H1 (cell line): ENCODE measurements at regions of chr11 and their contacts with region 1.

Region 1: GRCh38 chr11:59918987-59919589 is 19.1 kb upstream of the OOSP1 start:
- DNase-seq: peak in 1 of 2 experiments; percentile 55
- H3K4me3 ChIP-seq: no peak overlapping the region
- H3K27ac ChIP-seq: no peak overlapping the region
- H3K4me1 ChIP-seq: no peaks in the 10 kb centered on the region
- H3K27me3 ChIP-seq: no peaks in the 10 kb centered on the region
- CTCF ChIP-seq: peak in 2 of 3 experiments; percentile 54 to 66; a peak in 3 of 4 replicates
- EP300 ChIP-seq: no peak
- POLR2A ChIP-seq: no peak
- RAD21 ChIP-seq: peak; percentile 80 to 88

Region 2: DNA sequence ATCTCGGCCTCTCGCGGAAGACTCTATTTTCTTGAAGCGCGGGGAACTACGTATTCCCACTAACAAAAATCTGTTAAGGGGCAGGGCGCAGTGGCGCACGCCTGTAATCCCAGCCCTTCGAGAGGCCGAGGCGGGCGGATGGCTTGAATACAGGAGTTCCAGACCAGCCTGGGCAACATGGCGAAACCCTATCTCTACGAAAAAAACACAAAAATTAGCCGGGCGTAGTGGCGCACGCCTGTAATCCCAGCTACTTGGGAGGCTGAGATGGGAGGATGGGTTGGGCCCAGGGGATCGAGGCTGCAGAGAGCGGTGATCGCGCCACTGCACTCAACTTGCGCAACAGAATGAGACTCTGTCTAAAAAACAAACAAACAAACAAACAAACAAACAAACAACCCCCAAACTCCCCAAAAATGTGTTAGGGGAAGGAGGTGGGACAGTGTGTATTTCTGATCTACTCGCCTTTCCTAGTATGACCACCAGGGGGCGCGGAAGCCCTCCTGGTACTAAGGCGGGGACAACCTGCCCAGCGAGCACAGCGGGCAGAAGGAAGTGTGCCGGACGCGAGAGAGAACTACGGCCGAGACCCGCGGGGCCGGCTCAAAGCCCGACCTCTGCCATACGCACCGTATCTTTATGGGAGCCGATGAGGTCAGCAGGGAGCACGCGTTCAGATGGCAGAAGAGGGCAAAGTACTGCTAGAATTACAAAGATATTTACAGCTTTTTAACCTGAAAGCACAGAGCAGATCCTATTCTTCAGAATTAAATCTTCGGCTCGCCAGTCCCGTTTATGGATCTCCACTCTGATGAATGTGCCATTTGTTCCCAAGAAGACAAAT is 165.2 kb before region 1 on chr11:
- CTCF ChIA-PET with region 1: interaction called, 12 read pairs
- POLR2A ChIA-PET with region 1: interaction called, 3 read pairs
- DNase-seq: peak in 1 of 2 experiments; percentile 92
- H3K4me3 ChIP-seq: peak overlapping the region; percentile 88 to 94 (median 89)
- H3K27ac ChIP-seq: no peak overlapping the region
- H3K4me1 ChIP-seq: peaks cover 2 to 11% (median 7%) of the 10 kb centered on the region in 4 experiments; a peak in 6 of 7 replicates
- H3K27me3 ChIP-seq: peaks cover 0 to 6% (median 0%) of the 10 kb centered on the region in 4 experiments; a peak in 1 of 7 replicates
- CTCF ChIP-seq: peak; percentile 76 to 83 (median 78)
- EP300 ChIP-seq: no peak
- POLR2A ChIP-seq: no peak
- RAD21 ChIP-seq: peak; percentile 72 to 74

Region 3: GRCh38 chr11:59810189-59810910 is 108.7 kb before region 1 on chr11 and contains the start of gene MRPL16:
- CTCF ChIA-PET with region 1: interaction called, 14 read pairs
- POLR2A ChIA-PET with region 1: interaction called, 4 read pairs
- DNase-seq: peak; percentile 88 to 93
- H3K4me3 ChIP-seq: peak within 1 kb of the TSS; percentile 79 to 100 (median 90)
- H3K27ac ChIP-seq: peak within 1 kb of the TSS; percentile 87
- H3K4me1 ChIP-seq: peaks cover 0 to 8% (median 2%) of the 10 kb centered on the region in 4 experiments; a peak in 5 of 7 replicates
- H3K27me3 ChIP-seq: no peaks in the 10 kb centered on the region
- CTCF ChIP-seq: peak; percentile 22 to 31 (median 30); a peak in 3 of 4 replicates
- EP300 ChIP-seq: peak in 1 of 2 experiments; percentile 79; a peak in 1 of 3 replicates
- POLR2A ChIP-seq: peak; percentile 67 to 97
- RAD21 ChIP-seq: peak; percentile 26 to 43
- total RNA-seq, gene MRPL16: 76.8 and 79.8 TPM in 2 replicates

Region 4: DNA sequence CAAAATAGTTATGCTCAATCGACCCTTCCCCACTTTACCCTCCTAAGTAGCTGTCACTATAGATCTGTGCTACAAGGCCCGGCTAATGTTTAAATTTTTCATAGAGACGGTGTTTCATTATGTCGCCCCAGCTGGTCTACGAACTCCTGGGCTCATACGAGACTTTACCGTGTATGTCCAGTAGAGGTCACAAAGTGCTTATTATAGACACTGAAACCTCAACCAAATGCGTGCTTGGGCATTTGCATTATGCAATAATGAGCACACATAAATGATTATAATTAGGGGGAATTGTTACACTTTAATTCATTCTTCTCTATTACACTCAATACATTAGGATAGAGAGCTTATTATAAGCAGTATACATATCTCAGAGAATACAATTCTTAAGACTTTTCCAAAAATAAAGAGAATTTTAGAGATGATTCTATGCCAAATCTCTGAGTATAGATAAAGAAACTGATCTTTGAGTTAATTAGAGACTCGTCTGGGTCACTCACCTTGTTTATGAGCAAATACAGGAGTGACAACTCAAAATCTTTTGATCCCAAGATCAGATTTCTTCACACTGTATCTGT is 96.0 kb before region 1 on chr11:
- CTCF ChIA-PET with region 1: interaction called, 14 read pairs
- POLR2A ChIA-PET with region 1: no interaction called
- DNase-seq: no peak
- H3K4me3 ChIP-seq: no peak overlapping the region
- H3K27ac ChIP-seq: no peak overlapping the region
- H3K4me1 ChIP-seq: peaks cover 0 to 5% (median 0%) of the 10 kb centered on the region in 4 experiments; a peak in 2 of 7 replicates
- H3K27me3 ChIP-seq: no peaks in the 10 kb centered on the region
- CTCF ChIP-seq: peak; percentile 11 to 63 (median 62)
- EP300 ChIP-seq: no peak
- POLR2A ChIP-seq: no peak
- RAD21 ChIP-seq: peak; percentile 81 to 86

Region 5: GRCh38 chr11:59891781-59892181 is 27.3 kb before region 1 on chr11:
- CTCF ChIA-PET with region 1: interaction called, 12 read pairs
- POLR2A ChIA-PET with region 1: no interaction called
- DNase-seq: peak in 1 of 2 experiments; percentile 74
- H3K4me3 ChIP-seq: no peak overlapping the region; a peak in 1 of 8 replicates
- H3K27ac ChIP-seq: 0 out of 2 replicates have a peak overlapping the region, but pooled peaks have one; percentile 14
- H3K4me1 ChIP-seq: peaks cover 5 to 9% (median 9%) of the 10 kb centered on the region in 4 experiments
- H3K27me3 ChIP-seq: no peaks in the 10 kb centered on the region
- CTCF ChIP-seq: peak in 2 of 3 experiments; percentile 2 to 22; a peak in 2 of 4 replicates
- EP300 ChIP-seq: no peak
- POLR2A ChIP-seq: peak in 1 of 2 experiments; percentile 56; a peak in 2 of 3 replicates
- RAD21 ChIP-seq: peak in 1 of 2 experiments; percentile 1; a peak in 1 of 4 replicates

Region 6: GRCh38 chr11:59931688-59932087 is 12.6 kb after region 1 on chr11:
- CTCF ChIA-PET with region 1: interaction called, 29 read pairs
- POLR2A ChIA-PET with region 1: no interaction called
- DNase-seq: no peak
- H3K4me3 ChIP-seq: no peak overlapping the region
- H3K27ac ChIP-seq: no peak overlapping the region
- H3K4me1 ChIP-seq: no peaks in the 10 kb centered on the region
- H3K27me3 ChIP-seq: no peaks in the 10 kb centered on the region
- CTCF ChIP-seq: no peak
- EP300 ChIP-seq: no peak
- POLR2A ChIP-seq: no peak
- RAD21 ChIP-seq: no peak

Region 7: GRCh38 chr11:60056349-60056969 is 137.4 kb after region 1 on chr11 and contains the start of gene MS4A3:
- CTCF ChIA-PET with region 1: no interaction called
- POLR2A ChIA-PET with region 1: no interaction called
- DNase-seq: no peak
- H3K4me3 ChIP-seq: no peak within 1 kb of the TSS
- H3K27ac ChIP-seq: no peak within 1 kb of the TSS
- H3K4me1 ChIP-seq: peaks cover 0 to 6% (median 2%) of the 10 kb centered on the region in 4 experiments; a peak in 2 of 7 replicates
- H3K27me3 ChIP-seq: no peaks in the 10 kb centered on the region
- CTCF ChIP-seq: no peak
- EP300 ChIP-seq: no peak
- POLR2A ChIP-seq: no peak
- RAD21 ChIP-seq: no peak
- total RNA-seq, gene MS4A3: not detected in 2 replicates

Region 8: GRCh38 chr11:60251485-60252212 is 332.6 kb after region 1 on chr11:
- CTCF ChIA-PET with region 1: interaction called, 11 read pairs
- POLR2A ChIA-PET with region 1: no interaction called
- DNase-seq: no peak
- H3K4me3 ChIP-seq: no peak overlapping the region
- H3K27ac ChIP-seq: no peak overlapping the region
- H3K4me1 ChIP-seq: no peaks in the 10 kb centered on the region
- H3K27me3 ChIP-seq: no peaks in the 10 kb centered on the region
- CTCF ChIP-seq: peak in 2 of 3 experiments; percentile 64; a peak in 3 of 4 replicates
- EP300 ChIP-seq: no peak
- POLR2A ChIP-seq: no peak
- RAD21 ChIP-seq: peak; percentile 76 to 82